BJ (cell line): ENCODE measurements at regions of chr2 and their contacts with region 1.

Region 1: DNA sequence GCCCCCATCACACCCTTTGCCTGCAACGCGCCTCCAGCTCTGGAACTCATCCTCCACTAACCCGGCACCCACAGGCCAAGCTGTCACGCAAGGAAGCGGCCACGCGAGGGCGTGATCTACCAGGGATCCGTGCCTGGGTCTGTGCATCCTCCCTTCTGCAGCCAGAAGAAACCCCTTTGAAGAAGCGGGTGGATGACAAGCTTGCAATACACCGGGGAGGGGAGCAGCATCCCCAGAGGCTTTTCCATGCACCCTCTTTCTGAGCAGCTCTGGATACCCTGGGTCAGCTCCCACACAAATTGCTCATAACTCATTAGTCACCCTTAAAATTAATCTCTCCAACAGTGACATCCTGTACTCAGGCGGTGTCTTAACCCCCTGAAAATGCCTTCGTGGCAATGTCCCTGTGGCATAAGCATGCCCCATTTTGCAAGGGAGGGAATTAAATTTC is 47.6 kb downstream of the PDCL3 start:
- DNase-seq: no peak
- H3K4me3 ChIP-seq: no peak overlapping the region
- H3K27me3 ChIP-seq: peaks cover 3% of the 10 kb centered on the region
- CTCF ChIP-seq: peak; percentile 83

Region 2: GRCh38 chr2:100460904-100461530 is 149.4 kb before region 1 on chr2:
- CTCF ChIA-PET with region 1: no interaction called
- POLR2A ChIA-PET with region 1: no interaction called
- DNase-seq: no peak
- H3K4me3 ChIP-seq: no peak overlapping the region
- H3K27me3 ChIP-seq: no peaks in the 10 kb centered on the region
- CTCF ChIP-seq: no peak

Region 3: GRCh38 chr2:100592226-100592625 is 18.2 kb before region 1 on chr2:
- CTCF ChIA-PET with region 1: interaction called, 24 read pairs
- POLR2A ChIA-PET with region 1: no interaction called
- DNase-seq: no peak
- H3K4me3 ChIP-seq: no peak overlapping the region
- H3K27me3 ChIP-seq: no peaks in the 10 kb centered on the region
- CTCF ChIP-seq: no peak

Region 4: GRCh38 chr2:100752628-100753333 is 142.4 kb after region 1 on chr2:
- CTCF ChIA-PET with region 1: no interaction called
- POLR2A ChIA-PET with region 1: no interaction called
- DNase-seq: peak; percentile 64
- H3K4me3 ChIP-seq: no peak overlapping the region
- H3K27me3 ChIP-seq: no peaks in the 10 kb centered on the region
- CTCF ChIP-seq: no peak

Region 5: DNA sequence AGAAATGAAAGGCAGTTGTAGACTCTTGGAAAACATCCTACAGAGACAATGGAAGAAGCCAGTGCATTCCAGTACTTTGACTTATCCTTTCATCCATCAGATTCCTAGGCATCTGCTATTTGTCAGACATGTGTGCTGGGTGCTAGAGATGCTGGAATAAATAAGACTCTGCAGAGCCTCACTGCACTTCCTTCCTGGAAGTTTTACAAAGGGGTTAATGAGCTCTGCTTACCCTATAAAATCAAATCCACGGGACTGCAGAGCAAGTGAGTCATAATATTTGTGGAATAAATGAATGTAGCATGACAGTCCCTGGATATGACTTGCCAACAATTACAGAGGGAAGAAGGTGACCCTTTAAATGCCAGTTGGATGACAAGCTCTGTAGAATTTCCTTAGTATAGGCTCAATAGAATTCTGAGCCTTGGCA is 156.8 kb after region 1 on chr2:
- CTCF ChIA-PET with region 1: no interaction called
- POLR2A ChIA-PET with region 1: no interaction called
- DNase-seq: peak; percentile 85
- H3K4me3 ChIP-seq: no peak overlapping the region
- H3K27me3 ChIP-seq: no peaks in the 10 kb centered on the region
- CTCF ChIP-seq: no peak

Region 6: GRCh38 chr2:100984892-100985379 is 374.5 kb after region 1 on chr2:
- CTCF ChIA-PET with region 1: interaction called, 21 read pairs
- POLR2A ChIA-PET with region 1: no interaction called
- DNase-seq: no peak
- H3K4me3 ChIP-seq: no peak overlapping the region
- H3K27me3 ChIP-seq: no peaks in the 10 kb centered on the region; the same call in 1 of the 2 replicates
- CTCF ChIP-seq: peak; percentile 87